ENCODE measurements at regions of chr6 and their contacts with region 1.

Region 1: GRCh38 chr6:30914076-30914853 is at the start of gene VARS2:
- DNase-seq: peak; percentile 92
- ATAC-seq: peak; percentile 97 to 98
- H3K4me3 ChIP-seq: peak within 1 kb of the TSS; percentile 71
- H3K27ac ChIP-seq: peak within 1 kb of the TSS; percentile 92
- H3K4me1 ChIP-seq: peaks cover 46% of the 10 kb centered on the region
- H3K27me3 ChIP-seq: no peaks in the 10 kb centered on the region
- CTCF ChIP-seq: peak; percentile 51
- total RNA-seq, gene VARS2: 33.0 TPM

Region 2: DNA sequence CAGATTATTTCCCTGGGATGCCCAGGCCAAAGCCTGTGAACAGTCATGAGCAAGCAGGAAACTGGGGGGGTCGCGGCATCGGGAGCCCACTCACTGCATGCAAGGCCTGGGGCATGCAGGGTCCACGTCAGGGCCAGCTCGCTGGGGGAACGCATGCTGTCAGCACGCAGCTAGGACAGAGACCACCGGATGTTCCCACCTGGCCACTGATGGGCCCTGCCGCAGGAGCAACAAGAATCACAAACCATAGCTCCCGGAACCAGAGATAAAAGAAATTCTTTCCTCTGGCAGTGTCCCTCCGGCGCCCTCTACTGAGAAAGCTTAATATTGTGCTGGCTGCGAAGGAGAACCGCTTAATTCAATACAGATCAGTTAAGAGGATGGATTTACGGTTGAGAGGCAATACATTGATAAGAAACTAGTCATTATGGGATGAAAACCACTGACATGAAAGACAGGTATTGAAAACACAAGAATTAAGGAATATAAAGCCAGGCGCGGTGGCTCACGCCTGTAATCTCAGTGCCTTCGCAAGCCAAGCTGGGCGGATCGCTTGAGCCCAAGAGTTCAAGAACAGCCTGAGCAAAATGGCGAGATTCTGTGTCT is 165.5 kb after region 1 on chr6:
- intact Hi-C with region 1: loop called (anchors 10 kb)
- DNase-seq: peak; percentile 63
- ATAC-seq: peak; percentile 82 to 87
- H3K4me3 ChIP-seq: peak overlapping the region; percentile 22
- H3K27ac ChIP-seq: no peak overlapping the region
- H3K4me1 ChIP-seq: peaks cover 8% of the 10 kb centered on the region
- H3K27me3 ChIP-seq: no peaks in the 10 kb centered on the region
- CTCF ChIP-seq: peak; percentile 83

Measured in lower lobe of right lung (tissue), 2 donors.